Activated CD4-positive, alpha-beta T cell treated with anti-CD3 and anti-CD28 coated beads, Interleukin-2, amount 10 ng/mL, durations not matched to agents 7 days and 5 days (primary cell): ENCODE measurements at regions of chr10 and their contacts with region 1.

Region 1: DNA sequence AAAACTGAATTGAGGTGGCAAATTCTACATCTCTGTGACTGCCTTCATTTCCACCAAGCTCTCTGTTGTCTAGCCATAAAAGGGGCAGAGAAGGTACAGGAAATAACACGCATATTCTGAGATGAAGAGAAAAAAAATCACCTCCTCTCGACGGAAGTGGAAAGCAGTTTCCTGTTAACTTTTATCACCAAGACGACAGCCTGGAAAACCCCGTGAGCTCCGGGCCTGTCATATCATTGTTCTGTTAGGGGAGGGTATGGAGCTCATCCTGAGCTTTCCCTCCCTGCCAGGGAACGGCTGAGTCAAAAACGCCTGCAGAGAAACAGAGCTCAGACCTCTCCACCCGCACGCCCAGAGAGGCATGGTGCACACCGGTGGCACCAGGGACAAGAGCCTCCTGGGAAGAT is 200.3 kb downstream of the PRPF18 start:
- DNase-seq: peak; percentile 84
- H3K4me3 Mint-ChIP-seq: peak overlapping the region; percentile 65
- H3K27ac Mint-ChIP-seq: no peak overlapping the region
- H3K4me1 Mint-ChIP-seq: peaks cover 18% of the 10 kb centered on the region
- H3K27me3 Mint-ChIP-seq: no peaks in the 10 kb centered on the region

Region 2: GRCh38 chr10:13820119-13820956 is 33.3 kb after region 1 on chr10:
- CTCF ChIA-PET with region 1: no interaction called
- POLR2A ChIA-PET with region 1: no interaction called
- DNase-seq: peak; percentile 18
- H3K4me3 Mint-ChIP-seq: no peak overlapping the region
- H3K27ac Mint-ChIP-seq: peak overlapping the region; percentile 77
- H3K4me1 Mint-ChIP-seq: peaks cover 16% of the 10 kb centered on the region
- H3K27me3 Mint-ChIP-seq: peaks cover 9% of the 10 kb centered on the region

Region 3: DNA sequence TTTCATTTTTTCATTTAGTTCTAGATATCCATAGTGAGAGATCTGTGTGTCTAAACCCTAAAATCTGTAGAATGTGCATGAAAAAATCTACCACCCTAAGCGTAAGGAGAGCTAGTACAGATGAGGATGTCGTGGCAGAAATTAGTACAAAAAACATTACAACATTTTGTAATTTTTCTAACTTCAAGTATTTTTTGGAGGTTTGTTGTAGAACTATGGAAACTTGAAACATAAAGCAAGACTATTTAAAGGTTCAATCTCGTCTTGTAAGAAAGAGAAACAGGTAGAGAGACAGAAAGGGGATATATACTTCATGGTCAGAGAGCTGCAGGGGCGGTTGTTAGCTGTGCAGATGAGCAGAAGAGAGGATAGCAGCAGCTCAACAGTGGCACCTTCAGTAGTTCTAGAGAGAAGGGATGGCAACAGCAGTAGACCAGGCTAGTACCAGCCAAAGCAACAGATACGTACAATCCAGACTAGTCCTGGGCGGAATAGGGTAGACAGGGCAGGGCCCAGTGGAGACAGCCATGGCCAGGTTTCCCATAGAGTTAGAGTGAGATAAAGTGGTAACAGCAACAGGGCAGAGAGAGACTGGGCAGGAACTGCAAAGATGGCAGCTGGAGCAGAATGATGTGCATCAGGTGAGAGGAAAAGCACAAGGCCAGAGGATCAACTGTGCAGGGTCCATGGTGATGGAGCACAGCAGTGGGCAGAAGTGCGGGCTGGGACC is 398.5 kb after region 1 on chr10:
- CTCF ChIA-PET with region 1: no interaction called
- POLR2A ChIA-PET with region 1: interaction called, 11 read pairs
- DNase-seq: peak; percentile 68
- H3K4me3 Mint-ChIP-seq: peak overlapping the region; percentile 63
- H3K27ac Mint-ChIP-seq: peak overlapping the region; percentile 94
- H3K4me1 Mint-ChIP-seq: peaks cover 34% of the 10 kb centered on the region
- H3K27me3 Mint-ChIP-seq: peaks cover 58% of the 10 kb centered on the region